ENCODE measurements at regions of chr5 and their contacts with region 1.

Region 1: DNA sequence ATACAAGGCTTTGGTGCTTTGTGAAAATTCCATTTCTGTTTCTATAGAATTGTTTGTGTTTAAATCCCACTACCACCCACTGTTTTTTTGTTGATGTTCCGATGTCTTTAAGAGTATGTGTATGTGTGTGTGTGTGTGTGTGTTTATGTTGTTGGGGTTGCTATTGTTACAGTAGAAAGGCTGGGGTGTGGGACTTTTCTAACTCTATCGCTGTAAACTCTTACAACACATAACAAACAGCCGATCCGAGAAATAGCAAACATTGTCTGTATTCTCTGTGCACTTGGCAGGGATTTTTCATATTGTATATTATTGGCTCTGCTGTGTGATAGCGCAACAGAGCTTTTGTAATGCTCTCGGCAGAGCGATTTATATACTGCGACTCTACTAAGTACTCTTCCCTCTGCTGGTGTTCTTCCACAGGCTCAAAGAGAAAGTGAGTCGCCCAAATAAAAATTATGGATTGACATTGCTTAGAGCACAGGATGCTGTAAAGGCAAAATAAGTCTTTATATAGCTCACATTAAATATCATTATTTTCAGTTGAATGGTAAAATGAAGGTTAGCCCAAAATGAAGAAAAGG is 492.2 kb upstream of the ARRDC3 start:
- DNase-seq: no peak
- ATAC-seq: no peak
- H3K4me3 ChIP-seq: peak overlapping the region in 1 of 2 experiments; percentile 12; a peak in 1 of 4 replicates
- H3K27ac ChIP-seq: no peak overlapping the region
- H3K4me1 ChIP-seq: no peaks in the 10 kb centered on the region
- H3K27me3 ChIP-seq: no peaks in the 10 kb centered on the region
- CTCF ChIP-seq: no peak

Region 2: DNA sequence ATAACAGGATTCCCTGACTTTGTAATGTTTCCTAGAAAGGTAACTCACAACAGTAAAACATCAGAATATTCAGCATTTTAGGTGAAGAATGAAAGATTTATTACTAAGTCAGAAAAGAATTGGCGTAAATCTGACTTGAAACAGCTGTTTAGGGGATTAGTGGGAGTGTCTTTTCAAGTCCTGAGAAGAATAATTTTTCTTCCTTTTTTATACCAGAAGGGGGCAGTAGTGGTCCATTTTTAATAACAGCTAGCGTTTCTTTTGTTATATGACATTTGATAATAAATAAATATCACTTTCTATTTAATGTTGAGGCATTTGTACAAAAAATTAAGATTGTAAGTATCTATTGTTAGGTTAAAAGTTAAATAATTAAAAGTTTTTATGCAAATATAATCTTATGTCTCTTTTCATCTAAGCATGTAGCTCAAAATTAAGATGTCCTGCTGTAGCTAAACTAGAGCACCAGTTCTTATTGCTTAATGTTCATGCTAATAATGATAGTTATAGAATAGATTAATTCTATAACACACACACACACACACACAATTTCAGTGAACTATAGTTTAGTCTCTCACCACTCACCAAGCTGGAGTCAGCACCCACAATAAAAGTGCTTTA is 233.4 kb before region 1 on chr5:
- CTCF ChIA-PET with region 1: no interaction called
- POLR2A ChIA-PET with region 1: no interaction called
- in situ Hi-C with region 1: no loop called
- intact Hi-C with region 1: loop called (anchors 10 kb)
- DNase-seq: peak; percentile 15
- ATAC-seq: no peak
- H3K4me3 ChIP-seq: no peak overlapping the region
- H3K27ac ChIP-seq: peak overlapping the region; percentile 72; the same call in 1 of the 2 replicates
- H3K4me1 ChIP-seq: peaks cover 11% of the 10 kb centered on the region
- H3K27me3 ChIP-seq: no peaks in the 10 kb centered on the region
- CTCF ChIP-seq: peak; percentile 63; the same call in 1 of the 2 replicates